H1 (cell line): ENCODE measurements at regions of chr11 and their contacts with region 1.

Region 1: DNA sequence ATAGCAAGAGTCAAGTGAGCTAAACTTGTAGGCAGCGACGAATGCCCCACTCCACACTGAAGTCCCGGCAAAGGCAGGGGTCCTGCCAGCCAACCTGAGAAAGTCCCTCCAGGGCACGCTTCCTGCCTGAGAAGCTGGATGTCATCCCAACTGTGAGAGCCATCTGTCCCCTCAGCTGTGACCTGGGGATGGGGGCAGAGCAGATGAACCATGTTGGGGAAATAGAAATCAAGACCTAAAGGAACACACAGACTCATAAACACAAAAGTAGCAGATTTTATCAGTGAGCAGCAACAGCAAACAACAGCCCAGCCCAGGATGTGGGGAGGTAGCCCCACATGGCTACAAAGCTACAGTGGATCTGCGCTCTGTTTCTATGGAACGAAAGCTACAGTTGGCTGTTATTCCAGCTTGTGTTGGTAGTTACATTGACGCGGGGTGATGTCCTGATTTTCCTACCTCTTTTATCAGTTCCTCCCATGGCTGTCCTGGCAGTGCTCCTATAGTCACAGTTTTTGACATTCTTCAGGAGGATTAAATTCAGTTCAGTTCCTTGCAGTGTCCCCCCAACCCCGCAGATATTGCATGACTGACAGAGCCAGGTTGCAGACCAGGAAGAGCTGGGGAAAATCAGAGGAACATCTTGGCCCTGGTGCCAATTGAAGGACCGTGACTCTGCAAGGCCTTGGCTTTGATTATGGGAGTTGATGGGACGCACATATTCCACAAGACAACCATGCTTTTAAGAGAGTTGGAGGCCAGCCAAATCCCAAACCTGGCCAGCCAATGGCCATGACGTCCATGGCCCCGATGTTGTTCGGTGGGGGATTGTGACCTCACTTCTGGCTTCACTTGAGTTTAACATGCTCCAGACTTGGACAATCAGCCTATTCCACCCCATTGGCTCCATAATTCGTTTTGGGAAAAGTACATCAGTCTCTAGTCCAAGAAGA is 14.6 kb downstream of the MRGPRD start:
- DNase-seq: no peak
- H3K4me3 ChIP-seq: no peak overlapping the region
- H3K27ac ChIP-seq: no peak overlapping the region
- H3K4me1 ChIP-seq: no peaks in the 10 kb centered on the region
- H3K27me3 ChIP-seq: no peaks in the 10 kb centered on the region; a peak in 1 of 7 replicates
- CTCF ChIP-seq: no peak
- EP300 ChIP-seq: no peak
- POLR2A ChIP-seq: no peak
- RAD21 ChIP-seq: no peak

Region 2: GRCh38 chr11:68903288-68904247 is 62.6 kb before region 1 on chr11 and contains the starts of genes IGHMBP2 and MRPL21:
- CTCF ChIA-PET with region 1: no interaction called
- POLR2A ChIA-PET with region 1: no interaction called
- DNase-seq: peak; percentile 38 to 93
- H3K4me3 ChIP-seq: peak within 1 kb of the TSS; percentile 80 to 99 (median 95)
- H3K27ac ChIP-seq: peak within 1 kb of the TSS; percentile 65
- H3K4me1 ChIP-seq: peaks cover 0 to 10% (median 0%) of the 10 kb centered on the region in 4 experiments; a peak in 2 of 7 replicates
- H3K27me3 ChIP-seq: no peaks in the 10 kb centered on the region
- CTCF ChIP-seq: no peak
- EP300 ChIP-seq: peak; percentile 15 to 88; a peak in 2 of 3 replicates
- POLR2A ChIP-seq: peak; percentile 86 to 88
- RAD21 ChIP-seq: peak in 1 of 2 experiments; percentile 19; a peak in 1 of 4 replicates
- total RNA-seq, gene IGHMBP2: 17.6 and 19.1 TPM in 2 replicates
- total RNA-seq, gene MRPL21: 103 and 107 TPM in 2 replicates

Region 3: DNA sequence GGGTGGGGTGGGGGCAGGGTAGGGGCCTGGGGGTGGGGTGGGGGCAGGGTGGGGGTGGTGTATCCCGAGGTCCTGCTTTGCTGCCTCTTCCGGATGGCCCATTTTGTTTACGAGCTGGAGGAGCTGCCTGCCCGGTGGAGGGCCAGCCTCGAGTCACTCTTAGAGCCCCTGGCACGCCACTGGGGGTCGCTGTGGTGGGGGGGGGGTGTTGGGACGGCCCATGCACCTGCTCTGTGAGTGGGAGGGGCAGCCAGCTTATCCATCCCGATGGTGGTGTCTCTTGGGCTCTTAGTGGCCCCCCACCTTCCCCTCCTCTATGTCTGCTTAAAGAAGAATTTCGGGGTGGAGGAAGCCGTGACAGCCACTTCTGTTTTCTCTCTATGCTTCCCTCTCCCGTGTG is 10.0 kb before region 1 on chr11:
- CTCF ChIA-PET with region 1: interaction called, 13 read pairs
- POLR2A ChIA-PET with region 1: no interaction called
- DNase-seq: peak in 1 of 2 experiments; percentile 85
- H3K4me3 ChIP-seq: no peak overlapping the region
- H3K27ac ChIP-seq: no peak overlapping the region
- H3K4me1 ChIP-seq: peaks cover 0 to 8% (median 4%) of the 10 kb centered on the region in 4 experiments; a peak in 4 of 7 replicates
- H3K27me3 ChIP-seq: no peaks in the 10 kb centered on the region
- CTCF ChIP-seq: peak; percentile 65 to 73 (median 73)
- EP300 ChIP-seq: no peak
- POLR2A ChIP-seq: no peak
- RAD21 ChIP-seq: peak; percentile 33 to 56; a peak in 3 of 4 replicates